ENCODE measurements at regions of chr16 and their contacts with region 1.

Region 1: DNA sequence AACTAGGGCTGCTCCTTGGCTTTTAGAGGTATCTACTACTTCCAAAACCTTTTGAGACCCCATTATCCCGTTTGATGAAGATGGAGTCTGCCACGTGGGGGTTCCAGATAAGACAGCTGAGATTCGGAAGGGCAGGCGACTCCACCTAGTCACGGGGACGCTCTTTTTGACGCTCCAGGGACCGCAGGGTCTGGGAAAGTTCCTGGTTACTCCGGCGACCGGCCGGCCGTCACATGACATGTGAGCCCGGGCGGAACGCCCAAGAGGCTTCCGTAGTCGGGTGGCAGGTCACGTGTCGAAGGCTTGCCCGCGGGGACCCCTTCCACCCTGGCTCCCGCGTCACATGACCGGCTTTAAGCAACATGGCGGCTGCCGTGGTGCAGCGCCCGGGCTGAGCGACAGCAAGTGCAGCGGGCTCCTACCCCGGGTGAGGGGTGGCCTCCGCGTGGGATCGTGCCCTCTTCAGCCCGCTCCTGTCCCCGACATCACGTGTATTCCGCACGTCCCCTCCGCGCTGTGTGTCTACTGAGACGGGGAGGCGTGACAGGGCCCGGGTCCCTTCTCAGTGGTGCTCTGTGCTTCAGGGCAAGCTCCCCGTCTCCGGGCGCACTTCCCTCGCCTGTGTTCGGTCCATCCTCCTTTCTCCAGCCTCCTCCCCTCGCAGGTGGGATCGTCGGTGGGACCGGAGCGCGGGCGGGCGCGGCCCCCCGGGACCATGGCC is at the start of gene SPNS1:
- DNase-seq: peak; percentile 98
- ATAC-seq: peak; percentile 94
- H3K4me3 Mint-ChIP-seq: peak within 1 kb of the TSS; percentile 98
- H3K27ac Mint-ChIP-seq: peak within 1 kb of the TSS; percentile 90
- H3K4me1 Mint-ChIP-seq: peaks cover 29% of the 10 kb centered on the region
- H3K27me3 Mint-ChIP-seq: no peaks in the 10 kb centered on the region
- CTCF ChIP-seq: no peak
- total RNA-seq, gene SPNS1: 14.6 to 18.2 TPM

Region 2: DNA sequence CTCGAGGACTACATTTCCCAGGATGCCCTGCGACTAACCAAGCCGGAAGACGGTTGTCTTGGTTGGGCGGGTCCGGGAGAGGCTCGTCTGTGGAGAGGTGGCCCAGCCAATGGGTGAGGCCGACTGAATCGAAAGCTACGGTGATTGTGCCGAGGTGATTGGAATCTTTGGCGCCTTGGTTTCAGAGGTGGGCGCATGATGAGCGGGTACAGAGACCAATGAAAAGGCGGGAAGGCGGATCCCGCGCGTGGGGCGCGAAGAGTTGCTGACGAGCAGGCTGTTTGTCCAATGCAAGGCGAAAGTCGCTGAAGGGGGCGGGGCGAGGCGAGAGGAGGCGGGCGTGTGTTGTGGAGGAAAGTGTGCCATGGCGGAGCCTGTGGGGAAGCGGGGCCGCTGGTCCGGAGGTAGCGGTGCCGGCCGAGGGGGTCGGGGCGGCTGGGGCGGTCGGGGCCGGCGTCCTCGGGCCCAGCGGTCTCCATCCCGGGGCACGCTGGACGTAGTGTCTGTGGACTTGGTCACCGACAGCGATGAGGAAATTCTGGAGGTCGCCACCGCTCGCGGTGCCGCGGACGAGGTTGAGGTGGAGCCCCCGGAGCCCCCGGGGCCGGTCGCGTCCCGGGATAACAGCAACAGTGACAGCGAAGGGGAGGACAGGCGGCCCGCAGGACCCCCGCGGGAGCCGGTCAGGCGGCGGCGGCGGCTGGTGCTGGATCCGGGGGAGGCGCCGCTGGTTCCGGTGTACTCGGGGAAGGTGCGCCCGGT is 23.8 kb before region 1 on chr16 and contains the start of gene NFATC2IP:
- CTCF ChIA-PET with region 1: interaction called, 15 read pairs
- POLR2A ChIA-PET with region 1: interaction called, 9 read pairs
- intact Hi-C with region 1: no loop called
- DNase-seq: peak; percentile 100
- ATAC-seq: peak; percentile 96
- H3K4me3 Mint-ChIP-seq: peak within 1 kb of the TSS; percentile 96
- H3K27ac Mint-ChIP-seq: peak within 1 kb of the TSS; percentile 90
- H3K4me1 Mint-ChIP-seq: peaks cover 25% of the 10 kb centered on the region
- H3K27me3 Mint-ChIP-seq: no peaks in the 10 kb centered on the region
- CTCF ChIP-seq: no peak
- total RNA-seq, gene NFATC2IP: 63.8 to 71.8 TPM

Region 3: GRCh38 chr16:29029168-29029994 is 54.8 kb after region 1 on chr16:
- CTCF ChIA-PET with region 1: interaction called, 3 read pairs
- POLR2A ChIA-PET with region 1: interaction called, 12 read pairs
- intact Hi-C with region 1: no loop called
- DNase-seq: peak; percentile 98
- ATAC-seq: peak; percentile 97
- H3K4me3 Mint-ChIP-seq: peak overlapping the region; percentile 56
- H3K27ac Mint-ChIP-seq: peak overlapping the region; percentile 82
- H3K4me1 Mint-ChIP-seq: peaks cover 49% of the 10 kb centered on the region
- H3K27me3 Mint-ChIP-seq: no peaks in the 10 kb centered on the region
- CTCF ChIP-seq: no peak

Measured in activated CD8-positive, alpha-beta T cell treated with anti-CD3 and anti-CD28 coated beads for 36 hours (primary cell).